ENCODE measurements at regions of chr14 and their contacts with region 1.

Region 1: DNA sequence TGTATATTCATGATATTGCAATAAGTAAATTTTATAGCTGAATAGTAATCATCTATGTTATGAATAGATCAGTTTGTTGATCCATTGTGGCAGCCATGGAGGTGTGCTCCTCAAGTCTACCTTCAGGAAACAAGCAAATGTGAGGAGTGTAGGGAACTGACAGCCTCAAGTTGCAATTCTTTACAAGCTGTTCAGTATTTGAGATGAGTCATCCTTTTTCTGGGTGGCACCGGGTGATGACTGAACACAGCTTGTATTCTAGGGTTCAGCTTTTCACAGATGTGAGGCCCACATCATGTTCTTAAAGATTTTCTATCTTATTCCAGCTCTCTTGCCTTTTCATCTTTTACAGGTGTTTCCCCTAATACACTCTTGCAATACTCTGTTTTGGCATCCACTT is 452.4 kb downstream of the KCNH5 start:
- DNase-seq: no peak
- ATAC-seq: no peak
- H3K4me3 ChIP-seq: no peak overlapping the region
- H3K4me3 Mint-ChIP-seq: no peak overlapping the region
- H3K27ac ChIP-seq: no peak overlapping the region
- H3K27ac Mint-ChIP-seq: no peak overlapping the region
- H3K4me1 ChIP-seq: no peaks in the 10 kb centered on the region
- H3K4me1 Mint-ChIP-seq: no peaks in the 10 kb centered on the region
- H3K27me3 ChIP-seq: no peaks in the 10 kb centered on the region
- H3K27me3 Mint-ChIP-seq: no peaks in the 10 kb centered on the region
- CTCF ChIP-seq: no peak

Region 2: DNA sequence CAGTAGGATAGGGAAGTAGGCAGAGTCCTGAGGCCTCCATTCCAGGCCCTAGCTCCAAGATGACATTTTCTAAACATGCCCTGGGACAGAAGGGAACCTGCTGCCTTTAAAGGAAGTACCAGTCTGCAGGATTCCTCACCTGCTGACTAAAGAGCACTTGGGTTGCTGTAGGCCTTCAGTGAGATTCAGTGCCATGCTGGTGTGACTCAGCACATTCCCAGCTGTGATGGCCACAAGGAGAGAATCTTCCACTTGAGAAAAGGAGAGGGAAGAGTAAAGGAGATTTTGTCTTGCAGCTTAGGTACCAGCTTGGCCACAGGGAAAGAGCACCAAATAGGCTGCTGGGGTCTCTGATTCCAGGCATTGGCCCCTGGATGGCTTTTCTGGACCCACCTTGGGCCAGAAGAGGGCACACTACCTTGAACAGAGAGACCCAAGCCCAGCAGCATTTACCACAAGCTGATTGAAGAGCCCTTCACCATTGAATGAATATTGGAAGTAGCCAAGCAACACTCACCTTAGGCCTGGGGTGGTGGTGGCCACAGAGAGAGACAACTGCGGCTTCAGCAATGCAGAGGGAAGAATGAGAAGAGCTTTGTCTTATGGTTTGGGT is 45.9 kb before region 1 on chr14:
- CTCF ChIA-PET with region 1: no interaction called
- POLR2A ChIA-PET with region 1: no interaction called
- intact Hi-C with region 1: loop called in 1 of 2 experiments (anchors 1 kb)
- DNase-seq: no peak
- ATAC-seq: no peak
- H3K4me3 ChIP-seq: no peak overlapping the region
- H3K4me3 Mint-ChIP-seq: no peak overlapping the region
- H3K27ac ChIP-seq: no peak overlapping the region
- H3K27ac Mint-ChIP-seq: no peak overlapping the region
- H3K4me1 ChIP-seq: no peaks in the 10 kb centered on the region
- H3K4me1 Mint-ChIP-seq: no peaks in the 10 kb centered on the region
- H3K27me3 ChIP-seq: no peaks in the 10 kb centered on the region
- H3K27me3 Mint-ChIP-seq: no peaks in the 10 kb centered on the region
- CTCF ChIP-seq: no peak

Measured in CD8-positive, alpha-beta T cell (primary cell).